ENCODE measurements at regions of chr22 and their contacts with region 1.

Region 1: DNA sequence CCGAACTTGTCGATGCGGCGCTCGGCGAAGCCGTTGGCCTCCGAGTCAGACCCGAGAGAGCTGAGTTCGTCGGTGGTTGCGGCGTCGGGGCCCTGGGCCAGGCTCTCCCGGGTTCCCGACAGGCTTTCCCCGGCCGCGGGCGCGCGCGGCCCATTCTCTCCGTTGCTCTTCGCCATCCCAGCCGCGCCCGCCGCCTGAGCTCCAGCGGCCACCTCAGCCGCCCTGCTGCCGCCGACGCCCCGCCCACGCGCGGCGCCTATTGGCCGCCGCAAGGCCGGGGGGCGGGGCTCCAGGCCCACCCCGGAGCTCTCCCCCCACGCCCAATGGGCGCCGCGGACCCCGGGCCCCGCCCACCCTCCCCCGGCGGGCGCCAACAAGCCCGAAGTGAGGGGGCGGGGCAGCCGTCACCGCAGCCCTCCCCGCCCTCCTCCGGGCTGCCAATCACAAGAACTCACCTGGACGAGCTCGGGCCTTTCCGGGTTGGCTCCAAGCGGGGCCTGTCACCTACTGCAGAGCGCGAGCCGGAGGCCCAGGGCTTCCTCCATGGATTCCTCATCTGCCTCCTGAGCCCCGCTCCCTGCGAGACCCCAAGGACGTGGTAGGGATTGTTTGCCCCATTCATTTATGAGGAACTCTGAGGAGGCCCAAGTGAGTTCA is at the start of gene TBC1D10A:
- DNase-seq: peak; percentile 63
- ATAC-seq: peak; percentile 91
- H3K4me3 ChIP-seq: peak within 1 kb of the TSS; percentile 93
- H3K27ac ChIP-seq: peak within 1 kb of the TSS; percentile 81
- H3K4me1 ChIP-seq: peaks cover 16% of the 10 kb centered on the region
- H3K27me3 ChIP-seq: no peaks in the 10 kb centered on the region
- CTCF ChIP-seq: no peak
- EP300 ChIP-seq: no peak
- POLR2A ChIP-seq: peak; percentile 90
- RAD21 ChIP-seq: no peak
- polyA plus RNA-seq, gene TBC1D10A: 0.27 to 0.82 TPM

Region 2: DNA sequence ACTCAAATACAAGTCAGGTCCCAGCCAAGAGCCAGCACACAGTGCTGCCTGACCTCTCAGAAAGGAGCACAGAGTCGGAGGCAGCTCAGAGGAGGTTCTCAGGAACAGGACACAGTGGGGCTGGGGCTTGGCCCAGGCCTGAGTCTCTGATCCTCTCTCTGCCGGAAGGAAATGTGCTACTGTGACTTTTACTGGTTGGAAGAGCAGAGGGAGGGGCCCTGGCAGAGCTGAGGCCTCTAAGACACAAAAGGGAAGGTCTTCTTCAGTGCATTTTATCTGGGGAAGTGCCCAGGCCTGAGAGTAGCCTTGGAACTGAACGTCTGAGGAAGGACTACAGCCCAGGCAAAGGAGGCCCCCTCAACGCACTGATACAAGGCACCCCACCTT is 21.3 kb before region 1 on chr22:
- CTCF ChIA-PET with region 1: interaction called, 14 read pairs
- POLR2A ChIA-PET with region 1: interaction called, 198 read pairs
- RAD21 ChIA-PET with region 1: interaction called, 39 read pairs
- SMC1A ChIA-PET with region 1: interaction called, 92 read pairs
- in situ Hi-C with region 1: no loop called
- intact Hi-C with region 1: loop called (anchors 2 kb)
- DNase-seq: peak; percentile 59
- ATAC-seq: peak; percentile 63
- H3K4me3 ChIP-seq: peak overlapping the region; percentile 51
- H3K27ac ChIP-seq: peak overlapping the region; percentile 96
- H3K4me1 ChIP-seq: peaks cover 85% of the 10 kb centered on the region
- H3K27me3 ChIP-seq: no peaks in the 10 kb centered on the region
- CTCF ChIP-seq: no peak
- EP300 ChIP-seq: no peak
- POLR2A ChIP-seq: peak; percentile 74
- RAD21 ChIP-seq: no peak

Region 3: GRCh38 chr22:30314915-30315314 is 11.9 kb before region 1 on chr22:
- CTCF ChIA-PET with region 1: interaction called, 20 read pairs
- POLR2A ChIA-PET with region 1: interaction called, 198 read pairs
- RAD21 ChIA-PET with region 1: interaction called, 39 read pairs
- SMC1A ChIA-PET with region 1: interaction called, 92 read pairs
- in situ Hi-C with region 1: no loop called
- intact Hi-C with region 1: loop called (anchors 2 kb)
- DNase-seq: peak; percentile 66
- ATAC-seq: peak; percentile 67
- H3K4me3 ChIP-seq: 0 out of 2 replicates have a peak overlapping the region, but pooled peaks have one; percentile 1
- H3K27ac ChIP-seq: peak overlapping the region; percentile 80
- H3K4me1 ChIP-seq: peaks cover 61% of the 10 kb centered on the region
- H3K27me3 ChIP-seq: no peaks in the 10 kb centered on the region
- CTCF ChIP-seq: no peak
- EP300 ChIP-seq: peak in 1 of 2 experiments; percentile 39; a peak in 1 of 4 replicates
- POLR2A ChIP-seq: no peak
- RAD21 ChIP-seq: no peak

Region 4: GRCh38 chr22:30348809-30349208 is 22.0 kb after region 1 on chr22:
- CTCF ChIA-PET with region 1: interaction called, 4 read pairs
- POLR2A ChIA-PET with region 1: interaction called, 35 read pairs
- RAD21 ChIA-PET with region 1: interaction called, 4 read pairs
- SMC1A ChIA-PET with region 1: interaction called, 3 read pairs
- in situ Hi-C with region 1: no loop called
- intact Hi-C with region 1: no loop called
- DNase-seq: no peak
- ATAC-seq: peak; percentile 41
- H3K4me3 ChIP-seq: peak overlapping the region; percentile 28; the same call in 1 of the 2 replicates
- H3K27ac ChIP-seq: peak overlapping the region; percentile 77
- H3K4me1 ChIP-seq: peaks cover 13% of the 10 kb centered on the region
- H3K27me3 ChIP-seq: no peaks in the 10 kb centered on the region
- CTCF ChIP-seq: no peak
- EP300 ChIP-seq: no peak
- POLR2A ChIP-seq: no peak
- RAD21 ChIP-seq: no peak

Region 5: DNA sequence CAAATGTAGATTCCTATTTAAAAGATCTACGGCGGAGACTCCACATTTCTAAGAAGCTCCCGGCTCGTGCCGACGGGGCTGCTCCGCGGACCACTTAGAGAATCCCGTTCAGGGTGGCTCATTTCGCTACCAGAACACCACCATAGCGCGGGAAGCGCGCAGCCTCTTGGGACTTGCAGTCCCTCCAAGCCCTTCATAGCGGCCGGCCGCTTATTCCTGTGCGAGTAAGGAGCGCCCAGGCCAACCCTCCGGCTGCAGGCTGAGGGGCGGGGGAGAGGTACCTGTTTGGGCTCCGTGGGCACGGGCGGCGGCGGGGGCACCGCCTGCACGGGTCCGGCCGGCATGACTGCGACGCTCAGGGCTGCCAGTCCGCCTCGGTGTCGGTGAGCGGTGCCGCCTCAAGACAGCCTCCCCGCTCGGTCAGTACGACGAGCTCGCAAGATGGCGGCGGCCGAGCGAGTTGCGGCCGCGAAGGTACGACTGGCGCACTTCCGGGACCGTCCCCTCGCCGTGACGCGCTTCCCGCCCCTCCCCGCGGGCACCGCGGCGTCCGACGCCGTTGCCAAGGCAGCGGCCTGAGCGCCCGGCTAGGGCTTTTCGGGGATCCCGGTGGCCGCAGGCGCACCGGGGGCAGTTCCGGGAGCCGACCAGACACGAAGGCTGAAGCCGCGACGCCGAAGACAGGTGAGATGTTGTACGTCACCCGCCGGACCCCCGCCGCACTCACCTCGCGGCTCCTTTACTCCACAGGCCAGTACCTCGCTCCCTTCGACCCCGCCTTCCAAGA is 29.8 kb after region 1 on chr22 and contains the starts of genes CCDC157 and SF3A1:
- CTCF ChIA-PET with region 1: interaction called, 5 read pairs
- POLR2A ChIA-PET with region 1: interaction called, 35 read pairs
- RAD21 ChIA-PET with region 1: interaction called, 3 read pairs
- SMC1A ChIA-PET with region 1: interaction called, 6 read pairs
- in situ Hi-C with region 1: no loop called
- intact Hi-C with region 1: no loop called
- DNase-seq: peak; percentile 56
- ATAC-seq: peak; percentile 96
- H3K4me3 ChIP-seq: peak within 1 kb of the TSS; percentile 92
- H3K27ac ChIP-seq: peak within 1 kb of the TSS; percentile 92
- H3K4me1 ChIP-seq: 0 out of 2 replicates have a peak, but pooled peaks cover 5% of the 10 kb centered on the region
- H3K27me3 ChIP-seq: no peaks in the 10 kb centered on the region
- CTCF ChIP-seq: no peak
- EP300 ChIP-seq: 0 out of 4 replicates have a peak, but pooled peaks of 1 of the 2 experiments have one; percentile 20
- POLR2A ChIP-seq: peak; percentile 100
- RAD21 ChIP-seq: no peak
- polyA plus RNA-seq, gene CCDC157: 0.10 to 0.46 TPM
- polyA plus RNA-seq, gene SF3A1: 10.4 to 13.4 TPM

Measured in GM12878 (cell line).